GM13976 (cell line): ENCODE measurements at regions of chr16 and their contacts with region 1.

Region 1: GRCh38 chr16:71426072-71426879 is 15.6 kb downstream of the TLE7 start:
- DNase-seq: peak; percentile 71
- CTCF ChIP-seq: no peak

Region 2: DNA sequence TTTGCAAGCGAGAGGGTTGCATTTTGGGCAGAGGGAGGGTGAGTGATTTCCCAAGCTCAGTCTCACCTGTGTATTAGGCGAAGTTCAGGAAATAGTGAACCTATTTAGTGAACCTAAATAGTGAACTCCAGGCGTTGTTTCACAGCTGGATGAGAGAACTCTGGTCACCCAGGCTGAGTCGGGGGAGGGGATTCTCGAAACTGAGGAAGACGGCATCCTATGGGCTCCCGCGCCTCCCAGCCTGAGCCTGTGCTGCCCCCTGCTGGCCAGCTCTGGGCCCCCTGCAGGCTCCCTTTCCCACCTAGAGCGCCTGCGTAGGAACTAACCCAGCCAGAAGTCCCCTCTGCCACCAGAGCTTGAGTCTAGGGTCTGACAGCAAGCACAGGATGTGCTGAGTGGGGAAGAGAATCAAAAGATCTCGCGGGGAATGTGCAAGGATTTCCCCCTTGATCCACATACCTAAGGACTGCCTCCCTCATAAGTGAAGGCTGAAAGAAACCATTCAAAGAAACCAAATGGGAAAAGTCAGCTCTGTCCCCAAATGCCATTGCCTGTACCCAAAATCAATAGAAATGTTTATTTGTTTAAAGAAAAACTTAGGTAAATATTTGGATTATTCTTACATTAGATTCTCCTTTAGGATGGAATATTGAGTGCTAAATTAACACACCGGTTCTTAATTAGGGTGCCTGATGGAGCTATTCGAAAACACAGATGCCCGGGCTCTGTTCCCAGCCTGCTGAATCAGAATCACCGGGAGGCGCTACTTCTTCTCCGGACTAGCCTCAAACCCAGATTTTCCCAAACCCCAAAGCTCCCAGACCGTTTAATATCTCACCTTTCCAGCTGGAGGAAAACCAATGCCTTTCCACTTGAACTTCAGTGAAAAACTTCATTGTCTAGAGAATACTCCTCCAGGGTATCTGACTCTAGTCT is 184.9 kb after region 1 on chr16:
- in situ Hi-C with region 1: loop called (anchors 10 kb)
- DNase-seq: peak; percentile 85
- CTCF ChIP-seq: peak; percentile 99